Heart left ventricle (tissue), 16 donors: ENCODE measurements at regions of chr2 and their contacts with region 1.

Region 1: DNA sequence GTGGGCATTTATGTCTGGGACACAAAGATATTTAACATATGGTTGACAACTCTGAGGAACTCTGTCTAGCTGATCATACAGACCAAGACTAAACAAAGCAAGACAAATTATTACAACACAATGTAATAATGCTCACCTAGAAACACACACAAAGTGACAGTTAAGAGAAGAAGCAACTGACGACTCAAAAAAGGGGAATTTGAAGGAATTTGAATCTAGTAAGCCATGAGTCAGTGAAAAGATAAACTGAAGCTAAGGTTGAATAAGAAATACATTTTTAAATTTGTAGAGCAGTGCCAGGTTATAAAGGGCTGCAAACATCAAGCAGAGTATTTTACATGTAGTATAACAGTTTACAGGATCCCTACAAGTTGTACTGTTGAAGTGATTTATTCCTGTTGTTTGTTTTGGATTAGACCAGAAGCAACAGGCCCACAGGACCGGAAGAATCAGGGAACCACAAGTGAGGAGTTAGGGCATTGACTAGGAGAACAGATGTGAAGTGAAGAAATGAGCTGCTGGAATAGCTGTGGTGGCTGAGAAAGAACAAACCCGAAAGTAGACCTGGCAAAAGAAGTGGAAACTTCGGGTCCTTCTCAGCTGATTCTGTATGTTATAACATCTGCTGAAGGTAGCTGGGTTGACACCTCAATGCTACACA is 35.6 kb downstream of the IFIH1 start:
- DNase-seq: no peak
- ATAC-seq: peak; percentile 13 to 67 (median 40)
- H3K4me3 ChIP-seq: no peak overlapping the region
- H3K27ac ChIP-seq: peak overlapping the region in 1 of 12 donors; percentile 14
- H3K4me1 ChIP-seq: no peaks in the 10 kb centered on the region
- H3K27me3 ChIP-seq: no peaks in the 10 kb centered on the region
- CTCF ChIP-seq: no peak
- POLR2A ChIP-seq: no peak

Region 2: GRCh38 chr2:162143969-162144368 is 138.9 kb before region 1 on chr2:
- intact Hi-C with region 1: loop called in 1 of 10 experiments (anchors 10 kb)
- DNase-seq: no peak
- ATAC-seq: no peak
- H3K4me3 ChIP-seq: no peak overlapping the region
- H3K27ac ChIP-seq: no peak overlapping the region
- H3K4me1 ChIP-seq: no peaks in the 10 kb centered on the region
- H3K27me3 ChIP-seq: peaks cover 0 to 6% (median 0%) of the 10 kb centered on the region in 9 donors
- CTCF ChIP-seq: no peak
- POLR2A ChIP-seq: no peak

Region 3: DNA sequence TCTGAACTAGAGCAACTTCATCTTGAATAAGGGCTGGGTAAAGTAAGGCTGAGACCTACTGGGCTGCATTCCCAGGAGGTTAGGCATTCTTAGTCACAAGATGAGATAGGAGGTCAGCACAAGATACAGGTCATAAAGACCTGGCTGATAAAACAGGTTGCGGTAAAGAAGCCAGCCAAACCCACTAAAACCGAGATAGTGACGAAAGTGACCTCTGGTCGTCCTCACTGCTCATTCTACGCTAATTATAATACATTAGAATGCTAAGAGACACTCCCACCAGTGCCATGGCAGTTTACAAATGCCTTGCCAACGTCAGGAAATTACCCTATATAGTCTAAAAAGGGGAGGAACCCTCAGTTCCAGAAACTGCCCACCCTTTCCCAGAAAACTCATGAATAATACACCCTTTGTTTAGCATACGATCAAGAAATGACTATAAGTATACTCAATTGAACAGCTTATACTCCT is 1343.8 kb after region 1 on chr2:
- intact Hi-C with region 1: no loop called
- DNase-seq: peak in 1 of 5 donors; percentile 25
- ATAC-seq: peak; percentile 15 to 71 (median 54)
- H3K4me3 ChIP-seq: no peak overlapping the region
- H3K27ac ChIP-seq: peak overlapping the region in 4 of 12 donors; percentile 12 to 48 (median 26)
- H3K4me1 ChIP-seq: peaks cover 0 to 12% (median 0%) of the 10 kb centered on the region in 12 donors
- H3K27me3 ChIP-seq: no peaks in the 10 kb centered on the region
- CTCF ChIP-seq: no peak
- POLR2A ChIP-seq: no peak